ENCODE measurements at regions of chr12 and their contacts with region 1.

Region 1: DNA sequence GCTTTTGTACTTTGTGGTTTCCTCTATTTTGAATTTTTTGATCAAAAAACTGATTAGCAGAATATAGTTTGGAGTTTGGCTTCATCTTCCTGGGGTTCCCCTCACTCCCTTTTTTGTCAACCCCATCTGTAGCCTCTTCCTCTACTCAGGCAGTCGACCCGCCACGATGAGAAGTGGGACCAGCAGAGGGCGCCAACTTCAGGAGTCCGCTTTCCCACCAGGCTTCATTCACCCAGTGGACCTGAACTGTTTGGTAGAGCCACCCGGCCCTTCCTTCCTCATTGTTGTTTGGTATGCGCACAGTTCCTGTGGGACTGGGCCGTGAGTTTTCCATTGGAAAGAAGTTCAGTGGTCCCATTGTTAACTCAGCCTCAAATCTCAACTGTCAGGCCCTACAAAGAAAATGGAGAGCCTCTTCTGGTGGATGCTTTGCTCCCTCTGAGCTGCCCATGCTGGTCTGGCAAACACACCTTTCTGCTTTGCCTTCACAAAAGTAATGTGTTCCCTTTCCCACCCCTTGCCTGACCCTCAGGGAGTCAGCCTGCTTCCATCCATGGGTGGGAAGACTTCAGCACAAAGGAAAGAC is 21.7 kb downstream of the TMBIM6 start:
- DNase-seq: peak; percentile 67 to 81
- ATAC-seq: peak; percentile 83 to 84
- H3K4me3 ChIP-seq: no peak overlapping the region
- H3K27ac ChIP-seq: no peak overlapping the region
- H3K4me1 ChIP-seq: no peaks in the 10 kb centered on the region
- CTCF ChIP-seq: peak; percentile 82
- EP300 ChIP-seq: no peak
- POLR2A ChIP-seq: no peak
- RAD21 ChIP-seq: peak in 1 of 2 experiments; percentile 9; a peak in 1 of 5 replicates

Region 2: GRCh38 chr12:49750027-49750995 is 12.8 kb before region 1 on chr12:
- CTCF ChIA-PET with region 1: interaction called, 19 read pairs
- POLR2A ChIA-PET with region 1: no interaction called
- DNase-seq: peak in 1 of 2 experiments; percentile 49
- ATAC-seq: peak; percentile 71 to 91
- H3K4me3 ChIP-seq: no peak overlapping the region
- H3K27ac ChIP-seq: peak overlapping the region; percentile 63 to 78
- H3K4me1 ChIP-seq: peaks cover 21% of the 10 kb centered on the region
- CTCF ChIP-seq: no peak
- EP300 ChIP-seq: no peak
- POLR2A ChIP-seq: no peak
- RAD21 ChIP-seq: no peak

Region 3: DNA sequence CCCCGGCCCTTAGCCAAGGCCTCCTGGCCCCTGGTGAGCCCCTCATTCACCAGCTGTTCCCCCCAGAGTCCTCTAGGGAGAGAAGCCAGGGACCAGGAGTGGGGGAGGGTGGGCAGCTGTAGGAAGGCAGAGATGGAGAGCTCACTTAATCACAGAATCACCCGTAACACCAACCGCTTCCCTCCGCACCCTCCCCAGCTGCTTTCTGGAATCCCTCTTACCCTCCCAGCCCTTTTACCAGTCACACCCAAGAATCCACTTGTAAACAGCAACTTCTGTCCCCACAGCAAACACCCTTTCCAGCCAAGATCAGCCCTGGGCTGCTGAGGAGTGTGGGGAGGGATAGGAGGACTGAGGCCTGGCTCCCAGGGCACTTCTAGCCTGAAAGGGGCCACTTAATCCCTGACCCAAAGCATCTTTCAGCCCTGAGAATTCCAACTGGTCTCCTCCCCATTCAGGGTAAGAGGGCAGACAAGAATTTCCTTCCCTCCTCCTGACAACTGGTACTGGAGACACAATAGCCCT is 46.3 kb after region 1 on chr12:
- CTCF ChIA-PET with region 1: no interaction called
- POLR2A ChIA-PET with region 1: no interaction called
- DNase-seq: no peak
- ATAC-seq: no peak
- H3K4me3 ChIP-seq: no peak overlapping the region
- H3K27ac ChIP-seq: no peak overlapping the region
- H3K4me1 ChIP-seq: no peaks in the 10 kb centered on the region
- CTCF ChIP-seq: no peak
- EP300 ChIP-seq: no peak
- POLR2A ChIP-seq: no peak
- RAD21 ChIP-seq: no peak

Region 4: GRCh38 chr12:50132505-50133135 is 369.5 kb after region 1 on chr12:
- CTCF ChIA-PET with region 1: no interaction called
- POLR2A ChIA-PET with region 1: no interaction called
- DNase-seq: no peak
- ATAC-seq: no peak
- H3K4me3 ChIP-seq: no peak overlapping the region
- H3K27ac ChIP-seq: no peak overlapping the region
- H3K4me1 ChIP-seq: no peaks in the 10 kb centered on the region
- CTCF ChIP-seq: no peak
- EP300 ChIP-seq: no peak
- POLR2A ChIP-seq: no peak
- RAD21 ChIP-seq: no peak

Measured in A549 (cell line).